A549 (cell line): ENCODE measurements at regions of chr9 and their contacts with region 1.

Region 1: GRCh38 chr9:128818099-128818838 is at the start of gene ENDOG:
- DNase-seq: peak; percentile 97 to 98
- ATAC-seq: peak; percentile 86 to 92
- H3K4me3 ChIP-seq: peak within 1 kb of the TSS; percentile 76
- H3K27ac ChIP-seq: peak within 1 kb of the TSS; percentile 90 to 93
- H3K4me1 ChIP-seq: peaks cover 11% of the 10 kb centered on the region
- CTCF ChIP-seq: peak; percentile 72
- EP300 ChIP-seq: no peak
- POLR2A ChIP-seq: peak; percentile 96
- RAD21 ChIP-seq: peak; percentile 22 to 31; a peak in 1 of 5 replicates
- polyA plus RNA-seq, gene ENDOG: 12.6 and 12.8 TPM in 2 replicates

Region 2: GRCh38 chr9:128723866-128724743 is 94.2 kb before region 1 on chr9 and contains the start of gene ZDHHC12:
- CTCF ChIA-PET with region 1: interaction called, 4 read pairs
- POLR2A ChIA-PET with region 1: interaction called, 11 read pairs
- DNase-seq: peak; percentile 99 to 100
- ATAC-seq: peak; percentile 88 to 96
- H3K4me3 ChIP-seq: peak within 1 kb of the TSS; percentile 81
- H3K27ac ChIP-seq: peak within 1 kb of the TSS; percentile 85 to 91
- H3K4me1 ChIP-seq: peaks cover 14% of the 10 kb centered on the region
- CTCF ChIP-seq: peak; percentile 18; the same call in 1 of the 3 replicates
- EP300 ChIP-seq: no peak
- POLR2A ChIP-seq: peak; percentile 95
- RAD21 ChIP-seq: no peak; a peak in 1 of 5 replicates
- polyA plus RNA-seq, gene ZDHHC12: 37.6 and 55.5 TPM in 2 replicates

Region 3: GRCh38 chr9:128792978-128793686 is 25.1 kb before region 1 on chr9:
- CTCF ChIA-PET with region 1: interaction called, 12 read pairs
- POLR2A ChIA-PET with region 1: interaction called, 6 read pairs
- DNase-seq: no peak
- ATAC-seq: no peak
- H3K4me3 ChIP-seq: no peak overlapping the region
- H3K27ac ChIP-seq: no peak overlapping the region
- H3K4me1 ChIP-seq: peaks cover 4% of the 10 kb centered on the region; the same call in 2 of the 3 replicates
- CTCF ChIP-seq: no peak
- EP300 ChIP-seq: no peak
- POLR2A ChIP-seq: no peak
- RAD21 ChIP-seq: no peak

Region 4: GRCh38 chr9:128829477-128830251 is 11.4 kb after region 1 on chr9 and contains the start of gene SPOUT1:
- CTCF ChIA-PET with region 1: interaction called, 13 read pairs
- POLR2A ChIA-PET with region 1: interaction called, 24 read pairs
- DNase-seq: peak; percentile 91 to 97
- ATAC-seq: peak; percentile 95 to 97
- H3K4me3 ChIP-seq: peak within 1 kb of the TSS; percentile 84
- H3K27ac ChIP-seq: peak within 1 kb of the TSS; percentile 83 to 94
- H3K4me1 ChIP-seq: peaks cover 5% of the 10 kb centered on the region; the same call in 1 of the 3 replicates
- CTCF ChIP-seq: no peak
- EP300 ChIP-seq: no peak
- POLR2A ChIP-seq: peak; percentile 91
- RAD21 ChIP-seq: no peak
- polyA plus RNA-seq, gene SPOUT1: 24.3 and 25.8 TPM in 2 replicates